HepG2 (cell line): ENCODE measurements at regions of chr7 and their contacts with region 1.

Region 1: GRCh38 chr7:91784463-91784862 is 96.0 kb downstream of the MTERF1 start:
- DNase-seq: no peak
- ATAC-seq: no peak
- H3K4me3 ChIP-seq: no peak overlapping the region
- H3K27ac ChIP-seq: no peak overlapping the region
- H3K4me1 ChIP-seq: no peaks in the 10 kb centered on the region
- H3K27me3 ChIP-seq: no peaks in the 10 kb centered on the region; a peak in 1 of 5 replicates
- CTCF ChIP-seq: peak; percentile 46
- EP300 ChIP-seq: no peak
- POLR2A ChIP-seq: no peak
- RAD21 ChIP-seq: no peak

Region 2: DNA sequence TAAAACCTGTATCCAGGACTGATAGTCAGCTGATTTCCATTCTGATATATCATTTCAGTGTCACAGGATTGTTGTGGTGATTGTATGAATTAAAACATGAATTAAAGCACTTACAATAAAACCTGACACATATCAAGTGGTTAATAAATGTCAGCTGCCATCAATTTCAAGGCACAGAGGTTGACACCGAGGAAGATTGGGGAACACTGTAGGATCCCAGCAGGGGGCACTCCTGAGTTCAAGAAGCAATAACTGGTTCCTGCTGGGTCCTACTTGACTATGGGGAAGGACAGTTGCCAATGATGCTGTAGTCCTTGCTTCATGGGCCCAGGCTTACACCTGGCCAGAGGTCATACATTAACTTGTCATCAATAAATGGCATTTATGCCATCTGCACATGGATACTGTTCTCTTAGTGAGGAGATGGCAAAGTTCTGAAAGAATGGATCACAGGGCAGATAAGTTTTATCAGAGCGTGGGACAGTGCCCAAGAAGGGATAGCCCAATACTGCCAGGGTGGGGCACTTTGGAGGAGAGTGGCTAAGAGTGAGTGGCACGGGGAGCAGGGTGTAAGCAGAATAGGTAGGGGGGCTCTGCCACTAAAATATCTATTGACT is 496.1 kb before region 1 on chr7:
- CTCF ChIA-PET with region 1: no interaction called
- POLR2A ChIA-PET with region 1: no interaction called
- in situ Hi-C with region 1: no loop called
- intact Hi-C with region 1: loop called (anchors 2 kb)
- DNase-seq: peak; percentile 16
- ATAC-seq: peak; percentile 72
- H3K4me3 ChIP-seq: no peak overlapping the region
- H3K27ac ChIP-seq: no peak overlapping the region
- H3K4me1 ChIP-seq: no peaks in the 10 kb centered on the region
- H3K27me3 ChIP-seq: no peaks in the 10 kb centered on the region
- CTCF ChIP-seq: peak; percentile 62
- EP300 ChIP-seq: no peak
- POLR2A ChIP-seq: no peak
- RAD21 ChIP-seq: peak; percentile 13; the same call in 1 of the 2 replicates